Naive thymus-derived CD4-positive, alpha-beta T cell (primary cell): ENCODE measurements at regions of chr2 and their contacts with region 1.

Region 1: DNA sequence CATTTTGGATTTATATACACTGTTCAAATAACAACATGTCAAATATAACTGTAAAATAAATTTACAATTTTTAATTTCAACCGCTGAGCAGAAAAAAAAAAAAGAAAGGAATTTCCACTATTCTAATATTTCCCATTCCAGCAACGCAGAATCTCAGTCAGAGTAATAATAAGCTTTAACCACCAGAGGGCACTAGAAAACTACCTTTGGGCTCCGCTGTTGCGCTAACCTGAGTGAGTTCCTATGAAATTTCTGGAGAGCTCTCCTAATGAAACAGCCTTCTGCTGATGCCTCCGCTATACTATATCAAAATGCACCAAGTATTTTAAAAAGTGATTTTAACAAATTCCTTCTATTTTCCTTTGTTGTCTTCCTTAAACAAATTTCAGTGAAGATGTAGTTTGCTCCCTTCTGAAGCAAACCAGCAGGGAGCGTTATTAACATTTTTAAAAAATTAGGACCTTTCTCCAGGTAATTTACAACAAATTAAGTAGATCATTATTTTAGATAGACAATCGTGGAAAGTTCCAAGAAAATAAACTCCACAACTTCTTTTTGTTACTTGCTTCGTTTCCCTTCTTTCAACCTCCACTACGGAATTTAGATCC is 23.0 kb downstream of the ERMN start:
- DNase-seq: peak in 7 of 9 donors; percentile 33 to 72 (median 59)
- ATAC-seq: peak; percentile 89
- H3K4me3 ChIP-seq: no peak overlapping the region
- H3K4me3 Mint-ChIP-seq: peak overlapping the region in 4 of 10 donors; percentile 16 to 54 (median 38)
- H3K27ac ChIP-seq: no peak overlapping the region
- H3K27ac Mint-ChIP-seq: no peak overlapping the region
- H3K4me1 ChIP-seq: peaks cover 0 to 9% of the 10 kb centered on the region in 2 donors
- H3K4me1 Mint-ChIP-seq: peaks cover 7 to 33% (median 23%) of the 10 kb centered on the region in 7 donors
- H3K27me3 ChIP-seq: no peaks in the 10 kb centered on the region
- H3K27me3 Mint-ChIP-seq: peaks cover 0 to 25% (median 0%) of the 10 kb centered on the region in 5 donors

Region 2: GRCh38 chr2:157287160-157287559 is 15.4 kb before region 1 on chr2:
- CTCF ChIA-PET with region 1: interaction called, 10 read pairs
- POLR2A ChIA-PET with region 1: no interaction called
- intact Hi-C with region 1: no loop called
- DNase-seq: no peak
- ATAC-seq: no peak
- H3K4me3 ChIP-seq: no peak overlapping the region
- H3K4me3 Mint-ChIP-seq: no peak overlapping the region
- H3K27ac ChIP-seq: no peak overlapping the region
- H3K27ac Mint-ChIP-seq: no peak overlapping the region
- H3K4me1 ChIP-seq: no peaks in the 10 kb centered on the region
- H3K4me1 Mint-ChIP-seq: no peaks in the 10 kb centered on the region
- H3K27me3 ChIP-seq: no peaks in the 10 kb centered on the region
- H3K27me3 Mint-ChIP-seq: peaks cover 0 to 16% (median 10%) of the 10 kb centered on the region in 5 donors

Region 3: DNA sequence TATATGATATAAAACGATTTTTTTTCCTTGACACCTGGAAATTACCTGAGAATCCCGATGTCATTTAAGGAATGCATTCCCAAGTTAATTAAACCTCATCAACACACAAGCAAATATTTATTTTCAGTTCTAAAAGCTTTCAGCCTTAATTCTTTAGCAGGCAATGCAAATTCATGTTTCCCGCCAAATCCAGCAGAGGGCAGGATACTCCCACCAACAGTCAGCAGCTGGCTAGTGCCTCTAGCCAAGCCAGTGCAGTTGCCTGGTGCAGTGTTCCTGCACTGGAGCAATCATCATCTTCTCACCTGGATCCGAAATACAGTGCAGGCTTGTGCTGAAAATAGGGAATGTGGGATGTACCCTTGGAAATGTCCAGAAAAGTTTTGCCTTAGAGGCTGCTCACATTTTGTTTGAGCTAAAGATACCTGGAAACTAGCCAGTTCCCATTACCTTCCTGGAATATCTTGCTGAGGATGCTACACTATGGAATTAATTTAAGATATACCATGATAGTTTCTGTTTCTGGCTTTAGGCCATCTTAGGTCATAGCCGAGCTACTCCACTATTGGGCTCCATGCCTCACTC is 189.7 kb after region 1 on chr2:
- CTCF ChIA-PET with region 1: interaction called, 29 read pairs
- POLR2A ChIA-PET with region 1: interaction called, 3 read pairs
- intact Hi-C with region 1: loop called (anchors 1 to 2 kb)
- DNase-seq: peak; percentile 41 to 79 (median 68)
- ATAC-seq: peak; percentile 91
- H3K4me3 ChIP-seq: no peak overlapping the region
- H3K4me3 Mint-ChIP-seq: peak overlapping the region in 6 of 10 donors; percentile 1 to 39 (median 14)
- H3K27ac ChIP-seq: no peak overlapping the region
- H3K27ac Mint-ChIP-seq: peak overlapping the region in 3 of 9 donors; percentile 9 to 19 (median 13)
- H3K4me1 ChIP-seq: peaks cover 0 to 21% of the 10 kb centered on the region in 2 donors
- H3K4me1 Mint-ChIP-seq: peaks cover 10 to 67% (median 59%) of the 10 kb centered on the region in 7 donors
- H3K27me3 ChIP-seq: no peaks in the 10 kb centered on the region
- H3K27me3 Mint-ChIP-seq: no peaks in the 10 kb centered on the region

Region 4: DNA sequence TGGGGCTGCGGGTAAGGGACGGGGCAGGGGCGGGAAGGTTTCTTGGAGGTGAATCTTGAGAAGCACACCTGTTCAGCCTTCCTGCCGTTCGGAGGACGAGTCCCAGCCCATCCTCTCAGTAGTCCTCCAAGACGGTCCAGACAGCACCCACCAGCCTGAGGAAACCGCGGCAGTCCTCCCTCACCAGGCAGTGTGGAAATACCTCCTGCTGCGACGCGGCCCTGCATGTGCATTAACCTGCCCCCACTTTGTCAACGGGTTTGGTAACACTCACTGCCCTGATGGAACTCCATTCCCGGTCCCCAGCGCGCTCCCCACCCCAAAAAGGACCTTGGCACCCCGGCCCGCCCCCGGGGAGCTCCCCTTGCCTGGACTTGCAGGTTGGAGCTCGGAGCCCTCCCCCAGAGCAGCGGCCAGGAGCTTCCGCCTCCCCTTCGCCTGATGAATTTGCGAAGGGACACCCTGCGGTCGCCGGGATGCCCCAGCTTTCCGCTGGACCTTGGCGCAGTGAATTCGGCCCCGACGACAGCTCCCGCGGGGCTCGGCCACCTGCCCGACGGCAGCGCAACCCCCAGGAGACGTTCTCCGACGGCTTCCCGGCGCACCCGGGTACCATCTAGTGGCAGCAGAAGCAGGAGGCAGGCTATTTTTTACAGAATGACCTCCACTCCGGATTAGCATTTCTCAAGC is 294.5 kb after region 1 on chr2:
- CTCF ChIA-PET with region 1: interaction called, 73 read pairs
- POLR2A ChIA-PET with region 1: interaction called, 3 read pairs
- intact Hi-C with region 1: loop called (anchors 1 kb)
- DNase-seq: peak; percentile 32 to 60 (median 53)
- ATAC-seq: peak; percentile 80
- H3K4me3 ChIP-seq: no peak overlapping the region
- H3K4me3 Mint-ChIP-seq: peak overlapping the region; percentile 61 to 81 (median 72)
- H3K27ac ChIP-seq: no peak overlapping the region
- H3K27ac Mint-ChIP-seq: peak overlapping the region in 2 of 9 donors; percentile 21 to 65
- H3K4me1 ChIP-seq: no peaks in the 10 kb centered on the region
- H3K4me1 Mint-ChIP-seq: peaks cover 9 to 30% (median 20%) of the 10 kb centered on the region in 7 donors
- H3K27me3 ChIP-seq: no peaks in the 10 kb centered on the region
- H3K27me3 Mint-ChIP-seq: peaks cover 0 to 37% (median 0%) of the 10 kb centered on the region in 5 donors

Region 5: DNA sequence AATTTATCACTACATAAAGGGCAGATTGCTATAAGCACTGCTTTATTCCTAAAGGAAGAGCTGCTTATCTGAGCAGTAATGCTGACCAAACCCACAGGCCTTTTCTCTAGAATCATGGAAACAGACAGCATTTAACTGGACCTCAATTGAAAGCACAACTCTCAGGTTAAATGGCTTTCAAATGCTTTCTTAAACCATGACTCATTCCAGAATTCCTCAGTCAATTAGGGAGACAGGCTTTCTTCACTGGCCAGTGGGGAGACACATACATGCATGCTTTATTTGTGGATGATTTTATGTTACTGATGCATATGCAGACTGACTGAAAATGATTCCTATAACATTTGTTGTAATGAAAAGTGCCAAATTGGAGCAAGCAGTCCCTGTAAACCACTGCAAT is 458.9 kb after region 1 on chr2:
- CTCF ChIA-PET with region 1: interaction called, 12 read pairs
- POLR2A ChIA-PET with region 1: no interaction called
- intact Hi-C with region 1: loop called in 1 of 2 experiments (anchors 2 kb)
- DNase-seq: no peak
- ATAC-seq: no peak
- H3K4me3 ChIP-seq: no peak overlapping the region
- H3K4me3 Mint-ChIP-seq: no peak overlapping the region
- H3K27ac ChIP-seq: no peak overlapping the region
- H3K27ac Mint-ChIP-seq: no peak overlapping the region
- H3K4me1 ChIP-seq: no peaks in the 10 kb centered on the region
- H3K4me1 Mint-ChIP-seq: peaks cover 0 to 2% (median 0%) of the 10 kb centered on the region in 7 donors
- H3K27me3 ChIP-seq: no peaks in the 10 kb centered on the region
- H3K27me3 Mint-ChIP-seq: no peaks in the 10 kb centered on the region

Region 6: DNA sequence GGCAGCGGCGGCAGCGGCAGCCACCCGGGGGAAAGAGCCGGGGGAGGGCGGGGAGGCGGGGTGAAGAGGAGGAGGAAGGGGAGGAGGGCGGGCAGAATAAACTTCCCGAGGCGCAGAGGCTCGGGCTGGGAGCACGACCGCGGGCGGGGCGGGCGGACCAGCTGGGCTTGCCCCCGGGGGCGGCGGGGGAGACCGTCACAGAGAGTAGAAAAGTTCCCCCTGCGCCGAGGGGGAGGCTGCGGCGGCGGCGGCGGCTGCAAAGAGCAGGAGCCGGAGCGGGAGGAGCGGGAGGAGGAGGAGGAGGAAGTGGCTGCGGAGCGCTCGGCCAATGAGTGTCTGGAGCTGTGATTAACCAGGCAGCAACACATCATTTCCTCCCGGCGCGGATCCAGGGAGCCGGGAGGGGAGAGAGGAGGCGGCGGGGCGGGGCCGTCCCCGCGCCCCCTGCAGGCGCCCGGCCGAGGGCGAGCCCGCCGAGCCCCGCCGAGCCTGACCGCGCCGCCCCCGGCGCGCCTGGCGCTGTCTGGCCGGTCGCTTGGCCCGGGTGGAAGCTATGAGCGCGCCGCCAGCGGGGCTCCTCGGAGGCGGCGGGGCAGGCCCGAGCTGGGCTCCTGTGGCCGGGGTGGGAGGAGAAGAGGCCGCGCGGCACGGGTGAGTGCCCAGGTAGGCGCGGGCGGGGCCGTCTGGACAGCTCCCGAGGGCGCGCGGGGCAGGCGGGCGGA is 573.6 kb after region 1 on chr2 and contains the start of gene ACVR1:
- CTCF ChIA-PET with region 1: interaction called, 3 read pairs
- POLR2A ChIA-PET with region 1: no interaction called
- intact Hi-C with region 1: loop called in 1 of 2 experiments (anchors 10 kb)
- DNase-seq: peak; percentile 68 to 85 (median 75)
- ATAC-seq: peak; percentile 86
- H3K4me3 ChIP-seq: peak within 1 kb of the TSS; percentile 60
- H3K4me3 Mint-ChIP-seq: peak within 1 kb of the TSS; percentile 90 to 98 (median 96)
- H3K27ac ChIP-seq: peak within 1 kb of the TSS; percentile 77
- H3K27ac Mint-ChIP-seq: peak within 1 kb of the TSS; percentile 83 to 96 (median 90)
- H3K4me1 ChIP-seq: peaks cover 12 to 19% of the 10 kb centered on the region in 2 donors
- H3K4me1 Mint-ChIP-seq: peaks cover 24 to 63% (median 53%) of the 10 kb centered on the region in 7 donors
- H3K27me3 ChIP-seq: no peaks in the 10 kb centered on the region
- H3K27me3 Mint-ChIP-seq: no peaks in the 10 kb centered on the region
- total RNA-seq, gene ACVR1: 13.3 to 42.0 (median 20.6) TPM

Region 7: DNA sequence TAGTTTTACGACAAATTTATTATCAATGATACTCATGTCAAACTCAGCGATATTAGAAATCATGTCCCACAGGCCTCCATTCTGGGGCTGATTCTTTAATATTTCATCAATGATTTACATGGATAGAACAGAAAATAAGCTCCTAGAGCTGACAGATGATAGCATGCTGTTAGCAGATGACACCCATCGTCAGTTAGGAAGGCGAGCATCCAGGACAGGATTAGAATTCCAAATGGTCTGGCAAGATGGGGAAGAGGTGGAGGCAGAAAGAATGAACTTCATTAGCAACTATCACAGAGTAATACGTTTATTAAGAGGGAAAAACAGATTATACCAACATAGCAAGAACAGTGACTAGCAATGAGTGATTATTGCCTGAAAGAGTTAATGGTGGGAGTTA is 619.7 kb after region 1 on chr2:
- CTCF ChIA-PET with region 1: no interaction called
- POLR2A ChIA-PET with region 1: no interaction called
- intact Hi-C with region 1: no loop called
- DNase-seq: no peak
- ATAC-seq: no peak
- H3K4me3 ChIP-seq: no peak overlapping the region
- H3K4me3 Mint-ChIP-seq: no peak overlapping the region
- H3K27ac ChIP-seq: no peak overlapping the region
- H3K27ac Mint-ChIP-seq: no peak overlapping the region
- H3K4me1 ChIP-seq: no peaks in the 10 kb centered on the region
- H3K4me1 Mint-ChIP-seq: no peaks in the 10 kb centered on the region
- H3K27me3 ChIP-seq: no peaks in the 10 kb centered on the region
- H3K27me3 Mint-ChIP-seq: peaks cover 0 to 9% (median 2%) of the 10 kb centered on the region in 5 donors

Region 8: DNA sequence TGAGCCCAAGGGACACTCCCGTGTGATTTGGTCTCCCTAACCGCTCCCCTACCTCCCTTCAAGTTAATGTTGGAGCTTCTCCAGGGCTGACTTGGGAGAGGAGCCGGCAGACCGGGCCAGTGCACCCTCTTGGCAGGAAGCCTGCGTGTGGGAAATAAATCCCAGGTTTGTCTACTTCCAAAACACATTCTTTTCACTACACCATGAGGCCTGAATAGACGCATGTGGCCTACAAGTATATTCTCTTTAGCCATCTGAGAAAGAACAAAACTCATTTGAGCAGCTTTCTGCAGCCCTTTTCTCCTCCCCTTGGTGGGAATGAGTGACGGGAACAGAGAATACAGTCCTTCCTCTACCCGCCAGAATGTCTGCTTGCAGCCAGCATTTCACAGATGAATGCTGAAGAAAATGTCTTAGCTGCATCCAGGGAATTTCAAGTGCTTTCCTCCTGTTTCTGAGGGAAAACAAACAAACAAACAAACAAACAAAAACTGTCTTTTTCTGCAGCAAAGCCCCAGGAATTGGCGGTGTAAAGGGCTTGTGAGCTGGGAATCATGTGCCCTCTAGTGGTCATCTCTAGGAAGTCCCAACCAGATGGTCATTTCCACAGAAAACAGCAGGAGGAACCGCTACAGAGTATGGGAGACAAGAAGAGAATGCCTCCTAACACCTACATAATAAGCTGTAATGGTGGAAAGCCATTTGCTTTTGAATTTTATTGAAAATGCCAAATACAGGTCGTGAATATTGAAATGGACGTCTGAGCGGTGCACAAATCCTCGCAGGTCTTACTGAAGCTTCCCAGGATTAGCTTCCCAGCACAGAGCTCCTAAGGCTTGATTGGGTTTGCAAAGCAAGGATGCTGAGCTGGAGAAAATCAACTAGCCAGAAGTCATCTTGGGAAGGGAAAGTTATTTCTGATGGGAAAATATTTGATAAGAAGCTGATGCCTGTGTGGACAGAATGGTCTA is 1451.3 kb after region 1 on chr2:
- CTCF ChIA-PET with region 1: no interaction called
- POLR2A ChIA-PET with region 1: no interaction called
- intact Hi-C with region 1: loop called (anchors 2 to 10 kb)
- DNase-seq: peak in 5 of 9 donors; percentile 21 to 51 (median 42)
- ATAC-seq: peak; percentile 75
- H3K4me3 ChIP-seq: no peak overlapping the region
- H3K4me3 Mint-ChIP-seq: no peak overlapping the region
- H3K27ac ChIP-seq: no peak overlapping the region
- H3K27ac Mint-ChIP-seq: no peak overlapping the region
- H3K4me1 ChIP-seq: no peaks in the 10 kb centered on the region
- H3K4me1 Mint-ChIP-seq: no peaks in the 10 kb centered on the region
- H3K27me3 ChIP-seq: no peaks in the 10 kb centered on the region
- H3K27me3 Mint-ChIP-seq: peaks cover 0 to 29% (median 13%) of the 10 kb centered on the region in 5 donors